Heart left ventricle (tissue), 16 donors: ENCODE measurements at regions of chr5 and their contacts with region 1.

Region 1: DNA sequence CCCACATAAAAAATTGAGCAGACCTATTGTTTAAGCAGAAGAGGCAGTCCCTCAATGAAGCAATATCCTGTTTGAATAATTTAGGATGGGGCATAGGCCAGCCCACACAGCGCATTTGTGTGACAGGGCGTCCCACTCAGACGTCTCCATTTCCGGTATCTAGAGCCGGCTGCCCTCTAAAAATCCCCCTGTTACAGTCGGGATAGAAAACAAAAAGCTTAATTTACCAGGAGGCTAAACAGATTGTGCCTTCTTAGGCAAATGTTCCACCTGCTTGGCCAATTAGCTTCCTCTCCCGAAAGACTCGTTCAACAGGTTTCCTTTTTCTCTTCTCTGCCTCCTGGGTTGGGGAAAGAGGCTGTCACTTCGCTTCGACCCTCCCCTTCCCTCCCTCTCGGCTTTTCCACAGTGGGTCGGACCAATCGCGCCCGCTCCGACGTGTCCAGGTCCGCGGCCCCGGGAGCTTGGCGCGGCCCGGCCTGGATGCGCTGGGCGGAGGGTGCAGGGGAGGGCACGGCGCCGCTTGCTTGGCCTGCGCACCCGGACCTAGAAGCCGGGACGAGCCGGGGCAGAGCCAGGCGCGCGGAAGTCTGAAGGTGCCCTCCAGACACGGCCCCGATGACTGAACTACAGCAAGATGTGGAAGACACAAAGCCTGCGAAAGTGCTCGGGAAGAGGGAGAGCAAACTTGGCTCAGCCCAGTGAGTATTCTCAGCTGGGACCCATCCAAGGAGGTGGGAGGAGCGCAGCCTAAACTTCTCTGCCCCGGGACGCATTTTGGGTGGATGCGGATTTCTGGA is at the start of gene GRAMD2B:
- DNase-seq: peak; percentile 88 to 92 (median 91)
- ATAC-seq: peak; percentile 96 to 99 (median 98)
- H3K4me3 ChIP-seq: peak within 1 kb of the TSS; percentile 55 to 85 (median 72)
- H3K27ac ChIP-seq: peak within 1 kb of the TSS; percentile 79 to 98 (median 94)
- H3K4me1 ChIP-seq: peaks cover 0 to 35% (median 15%) of the 10 kb centered on the region in 12 donors
- H3K27me3 ChIP-seq: no peaks in the 10 kb centered on the region
- CTCF ChIP-seq: no peak
- POLR2A ChIP-seq: peak; percentile 71 to 92
- total RNA-seq, gene GRAMD2B: 28.2 to 50.4 (median 37.0) TPM

Region 2: GRCh38 chr5:126354012-126354857 is 69.0 kb before region 1 on chr5:
- intact Hi-C with region 1: loop called in 2 of 10 experiments (anchors 5 kb)
- DNase-seq: no peak
- ATAC-seq: peak; percentile 51 to 89 (median 78)
- H3K4me3 ChIP-seq: peak overlapping the region in 7 of 12 donors; percentile 14 to 39 (median 32)
- H3K27ac ChIP-seq: peak overlapping the region in 6 of 12 donors; percentile 25 to 63 (median 50)
- H3K4me1 ChIP-seq: peaks cover 0 to 8% (median 0%) of the 10 kb centered on the region in 12 donors
- H3K27me3 ChIP-seq: no peaks in the 10 kb centered on the region
- CTCF ChIP-seq: peak; percentile 26 to 82 (median 66)
- POLR2A ChIP-seq: no peak

Region 3: DNA sequence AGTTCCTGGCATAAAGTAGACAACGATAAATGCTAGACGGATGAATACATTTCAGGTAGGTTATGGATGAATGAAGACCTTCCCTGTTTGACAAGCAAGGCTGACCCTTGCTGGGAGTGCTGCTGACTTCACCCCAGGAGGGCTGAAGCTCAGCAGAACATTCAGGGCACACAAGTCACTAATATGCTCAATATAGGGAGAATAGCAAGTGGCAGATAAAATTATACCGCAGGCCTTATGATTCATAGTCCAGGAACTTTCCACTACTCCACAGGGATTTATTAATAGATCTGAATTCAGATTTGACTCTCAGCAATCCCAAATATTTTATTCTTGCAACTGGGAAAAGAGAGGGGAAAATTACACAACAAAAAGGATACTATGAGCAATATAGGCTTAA is 38.2 kb before region 1 on chr5:
- intact Hi-C with region 1: loop called in 1 of 10 experiments (anchors 5 kb)
- DNase-seq: no peak
- ATAC-seq: peak in 3 of 4 donors; percentile 58 to 81 (median 74)
- H3K4me3 ChIP-seq: no peak overlapping the region
- H3K27ac ChIP-seq: peak overlapping the region in 10 of 12 donors; percentile 2 to 77 (median 28)
- H3K4me1 ChIP-seq: peaks cover 0 to 23% (median 7%) of the 10 kb centered on the region in 12 donors
- H3K27me3 ChIP-seq: no peaks in the 10 kb centered on the region
- CTCF ChIP-seq: no peak
- POLR2A ChIP-seq: no peak

Region 4: DNA sequence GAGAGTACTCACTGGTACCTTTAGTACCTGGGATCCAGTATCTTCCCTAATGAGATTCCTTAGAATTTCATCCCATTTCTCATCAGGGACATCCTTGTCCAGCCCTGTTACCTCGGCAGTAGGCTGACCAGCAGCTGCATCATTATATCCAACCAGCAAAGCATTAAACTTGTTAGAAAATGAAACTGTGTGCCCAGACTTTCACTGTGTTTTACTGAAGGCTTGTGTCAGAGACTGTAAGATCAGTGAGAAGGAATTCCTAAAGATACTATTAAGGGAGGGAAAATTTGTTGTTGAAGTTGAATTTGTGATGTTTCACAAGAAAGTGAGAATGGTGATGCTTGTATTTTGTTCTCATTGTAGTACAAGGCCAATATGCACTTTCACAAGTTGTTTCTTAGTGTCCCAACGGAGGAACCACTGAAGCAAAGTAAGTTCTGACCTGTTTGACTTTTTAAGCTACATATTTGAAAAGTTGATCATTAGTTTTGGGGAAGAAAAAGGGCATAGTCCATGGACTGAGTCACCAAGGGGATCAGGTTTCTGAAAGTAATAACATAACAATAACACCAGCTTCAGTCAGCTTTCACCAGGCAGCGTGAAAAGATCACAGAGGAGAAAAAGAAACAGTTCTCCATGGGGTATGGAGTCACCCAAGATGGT is 48.8 kb after region 1 on chr5:
- intact Hi-C with region 1: loop called in 4 of 10 experiments (anchors 5 to 10 kb)
- DNase-seq: no peak
- ATAC-seq: no peak
- H3K4me3 ChIP-seq: no peak overlapping the region
- H3K27ac ChIP-seq: no peak overlapping the region
- H3K4me1 ChIP-seq: peaks cover 0 to 22% (median 9%) of the 10 kb centered on the region in 12 donors
- H3K27me3 ChIP-seq: no peaks in the 10 kb centered on the region
- CTCF ChIP-seq: no peak
- POLR2A ChIP-seq: no peak

Region 5: DNA sequence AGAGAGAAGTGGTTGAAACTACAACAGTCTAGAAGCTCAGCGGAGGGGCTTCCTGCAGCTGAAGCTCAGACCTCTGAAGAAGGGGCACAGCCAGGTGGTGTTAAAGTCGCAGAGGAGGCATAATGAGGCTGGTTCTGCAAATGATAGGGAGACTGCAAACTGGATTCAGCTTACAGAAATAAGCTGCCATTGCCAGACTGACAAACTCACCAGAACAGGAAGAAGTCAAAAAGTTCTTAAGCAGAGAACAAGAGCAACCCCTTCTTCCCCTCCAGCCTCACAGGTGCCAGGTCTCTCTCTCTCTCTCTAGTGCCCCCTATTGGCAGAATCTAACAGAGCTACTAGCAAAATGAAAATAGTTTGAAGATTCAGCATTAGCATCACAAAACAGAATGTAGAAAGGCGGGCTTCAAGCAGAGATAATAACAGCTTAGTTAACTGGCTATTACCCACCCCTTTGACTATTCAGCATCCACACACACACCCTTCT is 76.7 kb after region 1 on chr5:
- intact Hi-C with region 1: loop called in 1 of 10 experiments (anchors 10 kb)
- DNase-seq: no peak
- ATAC-seq: no peak
- H3K4me3 ChIP-seq: no peak overlapping the region
- H3K27ac ChIP-seq: no peak overlapping the region
- H3K4me1 ChIP-seq: peaks cover 0 to 20% (median 13%) of the 10 kb centered on the region in 12 donors
- H3K27me3 ChIP-seq: no peaks in the 10 kb centered on the region
- CTCF ChIP-seq: peak; percentile 19 to 63 (median 44)
- POLR2A ChIP-seq: no peak

Region 6: DNA sequence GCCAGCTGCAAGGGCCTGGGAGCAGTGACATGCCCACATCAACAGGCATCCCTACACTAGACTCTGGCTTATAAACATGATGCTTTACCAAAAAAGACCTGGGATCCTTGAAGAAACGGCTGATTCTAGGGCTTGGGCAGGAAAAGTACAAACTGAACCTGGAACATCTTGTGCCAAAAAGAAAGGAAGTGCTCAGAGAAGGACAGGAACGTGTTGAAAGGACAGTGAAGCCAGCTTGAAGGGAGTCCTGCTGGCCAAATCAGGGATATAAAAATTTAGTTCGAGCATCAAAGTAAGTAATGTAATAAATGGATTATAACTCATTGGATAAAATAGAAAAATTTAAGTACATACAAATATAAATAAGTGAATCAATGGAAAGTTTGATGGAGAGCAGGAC is 113.7 kb after region 1 on chr5:
- intact Hi-C with region 1: loop called in 4 of 10 experiments (anchors 5 to 10 kb)
- DNase-seq: no peak
- ATAC-seq: no peak
- H3K4me3 ChIP-seq: no peak overlapping the region
- H3K27ac ChIP-seq: peak overlapping the region in 1 of 12 donors; percentile 22
- H3K4me1 ChIP-seq: peaks cover 0 to 16% (median 5%) of the 10 kb centered on the region in 12 donors
- H3K27me3 ChIP-seq: no peaks in the 10 kb centered on the region
- CTCF ChIP-seq: no peak
- POLR2A ChIP-seq: no peak